Astrocyte of the cerebellum (primary cell): ENCODE measurements at regions of chr17 and their contacts with region 1.

Region 1: DNA sequence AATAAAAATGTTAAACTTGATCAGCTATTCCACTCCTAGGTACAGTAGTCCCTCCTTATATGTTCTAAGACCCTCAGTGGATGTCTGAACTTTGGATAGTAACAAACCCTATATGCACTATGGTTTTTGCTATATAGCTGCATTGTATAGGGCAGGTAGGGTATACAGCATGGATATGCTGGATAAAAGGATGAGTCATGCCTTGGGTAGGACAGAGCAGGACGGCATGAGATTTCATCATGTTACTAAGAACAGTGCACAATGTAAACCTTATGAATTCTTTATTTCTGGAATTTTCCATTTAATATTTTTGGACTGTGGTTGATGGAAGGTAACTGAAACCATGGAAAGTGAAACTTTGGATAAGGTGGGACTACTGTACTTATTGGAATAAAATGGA is 235.1 kb downstream of the CEP112 start:
- DNase-seq: no peak
- H3K4me3 ChIP-seq: no peak overlapping the region
- CTCF ChIP-seq: no peak

Region 2: GRCh38 chr17:65850486-65850885 is 106.3 kb before region 1 on chr17:
- in situ Hi-C with region 1: loop called (anchors 5 kb)
- DNase-seq: no peak
- H3K4me3 ChIP-seq: no peak overlapping the region
- CTCF ChIP-seq: no peak

Region 3: DNA sequence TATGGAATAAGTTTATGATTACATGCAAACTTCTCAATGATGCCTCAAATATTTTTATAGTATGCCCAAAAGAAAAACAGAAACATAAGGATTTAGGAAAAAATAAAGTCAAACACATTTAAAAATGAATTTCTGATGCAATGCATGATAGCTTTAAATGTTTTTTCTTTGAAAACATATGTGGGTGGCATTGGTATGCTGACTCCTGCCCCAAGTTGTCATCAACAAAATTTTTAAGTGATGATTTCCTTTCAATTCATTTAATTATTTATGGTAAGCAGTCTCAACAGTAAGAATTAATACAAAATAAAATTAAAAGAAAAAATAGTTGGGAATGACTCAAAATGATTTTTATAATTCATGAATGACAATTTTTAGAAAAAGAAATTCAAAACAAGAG is 130.3 kb after region 1 on chr17:
- in situ Hi-C with region 1: no loop called
- DNase-seq: no peak
- H3K4me3 ChIP-seq: no peak overlapping the region
- CTCF ChIP-seq: no peak

Region 4: GRCh38 chr17:66589892-66590291 is 633.1 kb after region 1 on chr17:
- in situ Hi-C with region 1: no loop called
- DNase-seq: no peak
- H3K4me3 ChIP-seq: no peak overlapping the region
- CTCF ChIP-seq: no peak